ENCODE measurements at regions of chr2 and their contacts with region 1.

Region 1: DNA sequence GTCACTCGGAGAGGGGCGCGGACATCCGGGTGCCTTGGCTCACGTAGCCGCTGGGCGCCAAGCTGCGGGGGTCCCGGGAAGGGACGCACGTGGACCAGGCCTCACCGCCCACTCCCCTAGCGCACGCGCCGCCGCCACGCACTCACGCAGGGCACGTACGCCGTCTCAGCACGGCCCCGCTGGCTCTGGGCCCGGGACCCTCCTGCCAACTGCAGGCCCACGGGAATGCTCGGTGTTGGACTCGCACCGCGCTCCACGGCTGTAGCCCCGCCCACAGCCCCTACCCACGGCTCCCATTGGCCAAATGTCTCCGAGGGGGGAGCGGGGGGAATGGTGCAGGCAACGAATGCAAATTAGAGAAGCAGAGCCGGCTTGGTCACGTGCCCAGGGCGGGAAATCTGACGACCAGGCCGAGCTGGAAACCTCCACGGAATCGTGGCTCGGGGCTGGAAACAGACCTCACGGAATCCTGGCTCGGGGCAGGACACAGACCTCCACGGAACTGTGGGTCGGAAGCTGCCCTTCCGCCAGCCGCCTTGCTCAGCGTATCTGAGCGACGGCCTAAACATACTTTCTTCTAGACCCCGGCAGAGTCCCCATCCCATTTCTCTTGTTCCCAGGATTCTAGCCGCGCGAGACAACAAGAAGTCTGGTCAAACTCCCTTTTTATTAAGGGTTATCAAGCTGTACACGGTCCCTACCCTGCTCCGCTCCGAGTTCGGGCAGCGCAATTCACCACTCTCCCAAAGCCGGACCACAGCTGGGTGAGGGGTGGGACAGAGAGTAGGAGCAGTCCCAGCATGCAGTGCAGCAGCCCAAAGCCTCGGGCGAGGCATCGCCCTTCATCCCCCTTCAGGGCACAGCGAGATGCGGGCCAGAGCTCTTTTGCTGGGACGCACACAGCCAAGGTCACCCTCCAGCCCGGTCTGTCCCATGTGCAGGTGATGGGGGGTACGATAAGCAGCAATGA is at the start of gene ABCB6:
- DNase-seq: peak; percentile 93
- H3K4me3 ChIP-seq: peak within 1 kb of the TSS; percentile 20 to 55 (median 46)
- H3K27ac ChIP-seq: peak within 1 kb of the TSS; percentile 82
- H3K4me1 ChIP-seq: peaks cover 14% of the 10 kb centered on the region
- H3K27me3 ChIP-seq: no peaks in the 10 kb centered on the region
- CTCF ChIP-seq: no peak
- POLR2A ChIP-seq: peak; percentile 83
- total RNA-seq, gene ABCB6: 26.6 and 32.5 TPM in 2 replicates

Region 2: GRCh38 chr2:219160186-219161017 is 58.6 kb before region 1 on chr2 and contains the start of gene NHEJ1:
- CTCF ChIA-PET with region 1: no interaction called
- POLR2A ChIA-PET with region 1: no interaction called
- dilution Hi-C with region 1: no loop called
- intact Hi-C with region 1: loop called (anchors 2 kb)
- DNase-seq: peak; percentile 96
- H3K4me3 ChIP-seq: peak within 1 kb of the TSS; percentile 24 to 89 (median 41)
- H3K27ac ChIP-seq: no peak within 1 kb of the TSS
- H3K4me1 ChIP-seq: peaks cover 10% of the 10 kb centered on the region
- H3K27me3 ChIP-seq: no peaks in the 10 kb centered on the region
- CTCF ChIP-seq: peak; percentile 96 to 99
- POLR2A ChIP-seq: peak; percentile 76
- total RNA-seq, gene NHEJ1: 12.1 and 12.9 TPM in 2 replicates

Region 3: DNA sequence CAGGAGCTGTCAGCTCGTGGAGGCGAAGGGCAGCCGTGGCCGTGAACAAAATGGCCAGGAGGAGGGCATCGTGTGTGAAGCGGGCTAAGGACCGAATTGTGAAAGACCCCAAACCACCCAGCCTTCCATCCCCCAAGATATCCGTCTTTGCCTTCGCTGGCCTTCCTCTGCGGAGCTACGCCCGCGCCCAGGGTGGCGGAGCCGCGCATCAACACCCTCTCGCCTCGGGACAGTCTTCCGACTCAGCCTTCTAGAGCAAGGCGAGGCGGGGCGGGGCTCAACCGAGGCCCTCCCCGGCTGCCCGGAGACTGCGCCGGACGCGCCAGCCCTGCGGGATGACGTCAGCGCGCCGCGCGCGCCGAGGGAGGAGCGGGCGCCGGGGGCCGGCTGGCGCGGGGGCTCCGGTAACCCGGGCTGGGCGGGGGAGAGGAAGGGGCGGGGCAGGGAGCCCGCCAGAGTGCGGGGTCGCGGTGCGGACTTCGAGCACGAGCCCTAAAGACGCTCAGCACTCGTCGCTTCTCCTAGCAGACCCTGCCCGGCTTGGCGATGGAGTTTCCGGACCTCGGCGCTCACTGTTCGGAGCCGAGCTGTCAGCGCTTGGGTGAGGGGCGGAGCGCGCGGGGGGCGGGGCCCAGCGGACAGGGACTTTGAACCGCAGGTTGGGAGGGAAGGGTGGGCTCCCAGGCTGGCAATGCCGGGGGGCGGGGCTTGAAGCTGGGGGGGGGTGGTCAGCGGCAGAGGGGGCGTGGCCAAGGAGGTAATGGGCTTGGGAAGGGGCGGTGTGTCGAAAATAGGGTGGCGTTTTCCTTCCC is 12.4 kb before region 1 on chr2 and contains the start of gene ZFAND2B:
- CTCF ChIA-PET with region 1: interaction called, 3 read pairs
- POLR2A ChIA-PET with region 1: interaction called, 4 read pairs
- dilution Hi-C with region 1: no loop called
- intact Hi-C with region 1: loop called (anchors 1 kb)
- DNase-seq: peak; percentile 94
- H3K4me3 ChIP-seq: peak within 1 kb of the TSS; percentile 36 to 83 (median 73)
- H3K27ac ChIP-seq: peak within 1 kb of the TSS; percentile 26
- H3K4me1 ChIP-seq: peaks cover 18% of the 10 kb centered on the region
- H3K27me3 ChIP-seq: no peaks in the 10 kb centered on the region
- CTCF ChIP-seq: no peak
- POLR2A ChIP-seq: peak; percentile 99
- total RNA-seq, gene ZFAND2B: 23.3 and 24.0 TPM in 2 replicates

Region 4: DNA sequence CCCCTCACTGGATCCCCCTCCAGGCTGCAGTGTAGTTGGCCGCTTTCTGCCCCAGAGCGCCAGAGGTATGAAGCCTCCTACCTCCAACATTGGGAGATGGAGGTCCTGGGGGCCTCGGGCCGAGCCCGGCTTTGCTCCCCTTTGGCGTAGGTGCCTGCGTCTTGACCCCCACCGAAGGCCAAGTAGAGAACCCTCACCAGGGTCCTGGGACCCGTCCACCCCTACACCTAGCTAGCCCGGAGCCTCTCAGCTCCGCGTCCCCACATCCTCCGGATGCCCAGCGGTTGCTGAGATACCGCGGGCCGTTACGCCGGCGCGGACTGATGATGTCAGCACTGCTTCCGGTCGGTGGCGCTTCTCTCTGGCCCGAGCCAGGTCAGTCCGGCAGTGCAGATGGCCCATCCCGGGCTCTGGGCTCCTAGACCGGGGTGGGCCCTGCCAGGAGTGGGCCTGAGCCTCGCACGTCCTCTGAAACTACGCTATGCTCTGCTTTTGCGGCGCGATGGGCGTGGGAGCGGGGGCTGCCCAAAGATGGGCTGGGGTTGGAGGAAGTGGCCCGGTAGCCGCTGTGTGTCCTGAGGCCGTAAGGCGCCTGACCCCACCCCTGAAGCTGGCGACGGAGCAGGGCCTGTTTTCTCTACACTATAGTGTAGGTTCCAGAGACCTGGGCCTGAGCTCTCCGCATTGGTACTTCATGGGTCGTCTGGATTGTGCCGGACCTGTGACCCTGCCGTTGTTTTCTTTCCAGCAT is 26.3 kb after region 1 on chr2 and contains the starts of genes GLB1L and STK16:
- CTCF ChIA-PET with region 1: interaction called, 4 read pairs
- POLR2A ChIA-PET with region 1: interaction called, 7 read pairs
- dilution Hi-C with region 1: no loop called
- intact Hi-C with region 1: loop called (anchors 1 kb)
- DNase-seq: peak; percentile 91
- H3K4me3 ChIP-seq: peak within 1 kb of the TSS; percentile 67 to 80 (median 67)
- H3K27ac ChIP-seq: peak within 1 kb of the TSS; percentile 92
- H3K4me1 ChIP-seq: peaks cover 28% of the 10 kb centered on the region
- H3K27me3 ChIP-seq: no peaks in the 10 kb centered on the region
- CTCF ChIP-seq: no peak
- POLR2A ChIP-seq: peak; percentile 93
- total RNA-seq, gene GLB1L: 9.2 and 9.5 TPM in 2 replicates
- total RNA-seq, gene STK16: 18.8 and 21.1 TPM in 2 replicates

Region 5: GRCh38 chr2:219278655-219279516 is 59.9 kb after region 1 on chr2 and contains the start of gene DNAJB2:
- CTCF ChIA-PET with region 1: interaction called, 3 read pairs
- POLR2A ChIA-PET with region 1: no interaction called
- dilution Hi-C with region 1: no loop called
- intact Hi-C with region 1: loop called (anchors 1 kb)
- DNase-seq: peak; percentile 99
- H3K4me3 ChIP-seq: peak within 1 kb of the TSS; percentile 9 to 55 (median 47)
- H3K27ac ChIP-seq: peak within 1 kb of the TSS; percentile 85
- H3K4me1 ChIP-seq: peaks cover 17% of the 10 kb centered on the region
- H3K27me3 ChIP-seq: no peaks in the 10 kb centered on the region
- CTCF ChIP-seq: no peak
- POLR2A ChIP-seq: peak; percentile 93
- total RNA-seq, gene DNAJB2: 27.3 and 30.4 TPM in 2 replicates

Measured in endothelial cell of umbilical vein (primary cell).